ENCODE measurements at regions of chr12 and their contacts with region 1.

Region 1: GRCh38 chr12:34212651-34213050 is 190.4 kb downstream of the ALG10 start:
- DNase-seq: no peak
- ATAC-seq: no peak
- H3K4me3 ChIP-seq: no peak overlapping the region
- H3K4me3 Mint-ChIP-seq: no peak overlapping the region
- H3K27ac ChIP-seq: no peak overlapping the region
- H3K27ac Mint-ChIP-seq: no peak overlapping the region
- H3K4me1 ChIP-seq: no peaks in the 10 kb centered on the region
- H3K4me1 Mint-ChIP-seq: no peaks in the 10 kb centered on the region
- H3K27me3 ChIP-seq: no peaks in the 10 kb centered on the region
- H3K27me3 Mint-ChIP-seq: no peaks in the 10 kb centered on the region
- CTCF ChIP-seq: no peak

Region 2: DNA sequence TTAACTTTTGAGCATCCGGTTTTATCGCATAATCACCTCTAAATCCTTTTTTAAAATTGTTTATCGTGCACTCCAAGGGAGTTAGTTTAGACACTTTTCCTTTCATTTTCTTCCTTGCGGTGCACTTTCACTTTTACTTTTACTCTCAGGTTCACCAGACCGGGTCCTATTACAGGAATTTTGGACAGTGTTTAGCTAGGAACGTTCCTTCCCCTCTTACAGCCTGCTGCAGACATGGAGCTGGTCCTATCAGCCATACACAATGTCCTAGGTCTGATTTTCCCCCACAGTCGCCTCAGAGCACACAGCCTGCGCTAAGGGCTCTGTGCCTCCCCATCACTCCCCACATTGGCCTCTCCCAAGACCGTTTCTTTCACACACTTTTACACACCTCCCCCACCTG is 86.4 kb before region 1 on chr12:
- CTCF ChIA-PET with region 1: no interaction called
- POLR2A ChIA-PET with region 1: no interaction called
- intact Hi-C with region 1: loop called in 1 of 2 experiments (anchors 2 kb)
- DNase-seq: peak in 3 of 14 experiments; percentile 15 to 61 (median 21)
- ATAC-seq: no peak
- H3K4me3 ChIP-seq: peak overlapping the region; percentile 46
- H3K4me3 Mint-ChIP-seq: peak overlapping the region; percentile 69
- H3K27ac ChIP-seq: no peak overlapping the region
- H3K27ac Mint-ChIP-seq: no peak overlapping the region
- H3K4me1 ChIP-seq: peaks cover 15% of the 10 kb centered on the region
- H3K4me1 Mint-ChIP-seq: peaks cover 12% of the 10 kb centered on the region
- H3K27me3 ChIP-seq: no peaks in the 10 kb centered on the region
- H3K27me3 Mint-ChIP-seq: peaks cover 11% of the 10 kb centered on the region
- CTCF ChIP-seq: no peak